Esophagus muscularis mucosa (tissue), 4 donors: ENCODE measurements at regions of chr1 and their contacts with region 1.

Region 1: DNA sequence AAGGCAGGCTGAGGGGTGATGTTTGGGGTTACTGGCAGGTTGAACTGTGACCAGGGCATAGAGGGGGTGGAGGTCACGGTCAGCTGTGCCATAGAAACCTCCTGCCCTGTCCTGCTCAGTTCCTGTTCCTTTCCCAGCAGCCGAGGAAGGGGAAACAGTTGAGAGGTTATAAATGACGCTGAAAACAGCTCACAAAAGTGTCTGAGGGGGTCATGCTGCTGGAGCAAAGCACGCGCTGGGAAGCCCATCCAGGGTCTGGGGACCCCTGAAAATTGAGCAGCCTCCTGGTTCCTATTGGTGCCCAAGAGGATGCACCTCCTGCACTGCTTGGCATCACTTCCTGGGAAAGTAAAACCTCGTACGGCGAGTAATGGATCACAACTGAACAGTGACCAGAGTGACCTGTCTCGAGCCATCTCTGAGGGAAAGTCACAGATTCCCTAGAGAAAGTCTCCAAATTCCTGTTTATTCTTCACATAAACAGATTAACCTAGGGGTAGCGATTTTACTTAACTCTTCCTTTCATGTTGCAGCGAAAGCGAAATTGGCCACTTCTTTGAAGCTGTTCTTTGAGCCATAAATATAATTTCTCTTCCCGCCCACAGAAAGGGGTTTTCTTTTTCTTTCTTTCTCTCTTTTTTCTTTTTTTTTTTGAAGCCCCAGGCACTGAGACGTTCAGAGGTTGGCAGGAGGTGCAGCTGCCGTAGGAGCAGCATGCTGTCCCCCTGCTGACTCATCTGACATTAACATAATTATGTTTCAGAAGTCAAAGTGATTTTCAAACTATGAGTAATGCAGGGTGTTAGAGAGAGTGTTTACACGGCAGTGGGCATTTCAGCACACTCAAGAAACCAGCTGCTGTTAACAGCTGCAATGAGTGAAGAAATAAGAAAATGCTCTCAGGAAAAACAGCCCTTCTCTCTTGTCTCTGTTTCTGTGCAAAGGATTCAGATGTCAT is 41.8 kb upstream of the ATF3 start:
- DNase-seq: peak; percentile 91
- H3K4me3 ChIP-seq: peak overlapping the region; percentile 52 to 63 (median 60)
- H3K27ac ChIP-seq: peak overlapping the region; percentile 75 to 84 (median 80)
- H3K4me1 ChIP-seq: peaks cover 9 to 23% (median 20%) of the 10 kb centered on the region in 4 donors
- H3K27me3 ChIP-seq: no peaks in the 10 kb centered on the region
- CTCF ChIP-seq: no peak
- EP300 ChIP-seq: no peak
- POLR2A ChIP-seq: no peak

Region 2: GRCh38 chr1:212608209-212608955 is 41.6 kb after region 1 on chr1 and contains the start of gene ATF3:
- intact Hi-C with region 1: loop called (anchors 5 kb)
- DNase-seq: peak; percentile 100
- H3K4me3 ChIP-seq: peak within 1 kb of the TSS; percentile 69 to 90 (median 83)
- H3K27ac ChIP-seq: peak within 1 kb of the TSS; percentile 98 to 100 (median 99)
- H3K4me1 ChIP-seq: peaks cover 40 to 56% (median 48%) of the 10 kb centered on the region in 4 donors
- H3K27me3 ChIP-seq: peaks cover 0 to 33% (median 20%) of the 10 kb centered on the region in 4 donors
- CTCF ChIP-seq: no peak
- EP300 ChIP-seq: peak; percentile 17
- POLR2A ChIP-seq: peak; percentile 99
- total RNA-seq, gene ATF3: 2.9 to 29.7 (median 3.7) TPM